ENCODE measurements at regions of chr10 and their contacts with region 1.

Region 1: GRCh38 chr10:3668276-3668965 is 116.6 kb downstream of the KLF6 start:
- DNase-seq: peak; percentile 55
- H3K4me3 Mint-ChIP-seq: peak overlapping the region; percentile 82
- H3K27ac Mint-ChIP-seq: peak overlapping the region; percentile 89
- H3K4me1 Mint-ChIP-seq: peaks cover 44% of the 10 kb centered on the region
- H3K27me3 Mint-ChIP-seq: peaks cover 3% of the 10 kb centered on the region

Region 2: GRCh38 chr10:3684891-3685290 is 16.5 kb after region 1 on chr10:
- intact Hi-C with region 1: loop called (anchors 2 kb)
- DNase-seq: no peak
- H3K4me3 Mint-ChIP-seq: no peak overlapping the region
- H3K27ac Mint-ChIP-seq: peak overlapping the region; percentile 50
- H3K4me1 Mint-ChIP-seq: peaks cover 31% of the 10 kb centered on the region
- H3K27me3 Mint-ChIP-seq: no peaks in the 10 kb centered on the region